ENCODE measurements at regions of chr17 and their contacts with region 1.

Region 1: DNA sequence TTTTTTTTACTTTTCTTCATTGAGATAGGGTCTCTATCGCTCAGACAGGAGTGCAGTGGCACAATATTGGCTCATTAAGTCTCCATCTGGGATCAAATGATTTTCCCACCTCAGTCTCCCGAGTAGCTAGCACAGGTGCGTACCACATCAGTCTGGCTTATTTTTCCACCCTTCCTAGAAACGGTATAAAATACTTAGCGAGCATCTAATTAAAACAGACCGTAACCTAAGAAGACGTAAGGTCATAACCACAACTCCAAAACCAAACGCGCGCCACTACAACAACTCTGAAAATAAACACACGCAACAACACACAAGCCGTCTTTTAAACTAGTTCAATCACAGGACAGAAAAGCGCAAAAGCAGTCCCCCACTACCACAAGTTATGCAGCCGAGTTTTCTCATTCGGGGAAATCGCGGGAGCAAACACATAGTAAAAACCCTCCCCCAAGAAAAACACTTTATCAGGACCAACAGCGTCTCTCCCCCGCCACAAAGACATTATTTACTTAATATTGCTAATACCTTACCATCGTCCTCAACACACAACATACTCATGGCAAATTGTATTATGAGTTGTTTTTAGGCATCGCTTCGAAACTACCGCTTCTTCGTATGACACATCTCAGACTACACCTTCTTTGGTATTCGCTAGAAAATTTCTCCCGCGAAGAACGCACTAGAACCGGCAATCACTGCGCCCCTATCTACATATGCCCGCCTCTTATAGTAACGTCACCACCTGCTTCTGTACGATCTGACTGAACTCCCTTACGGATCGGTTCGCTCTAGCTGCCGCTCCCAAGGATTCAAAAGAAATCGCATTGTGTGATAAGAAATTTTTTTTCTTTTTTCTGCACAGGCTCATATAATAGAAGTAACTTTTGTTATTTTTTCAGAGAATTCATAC is 32.8 kb downstream of the TEX14 start:
- DNase-seq: peak; percentile 81 to 96 (median 84)
- ATAC-seq: peak; percentile 97
- H3K4me3 ChIP-seq: peak overlapping the region; percentile 40
- H3K27ac ChIP-seq: peak overlapping the region; percentile 100
- H3K4me1 ChIP-seq: peaks cover 3 to 5% of the 10 kb centered on the region in 2 experiments; a peak in 2 of 5 replicates
- H3K27me3 ChIP-seq: no peaks in the 10 kb centered on the region
- CTCF ChIP-seq: peak in 2 of 3 experiments; percentile 17 to 18; a peak in 2 of 6 replicates
- EP300 ChIP-seq: peak; percentile 89
- POLR2A ChIP-seq: peak; percentile 100
- RAD21 ChIP-seq: peak; percentile 28 to 59; a peak in 3 of 4 replicates

Region 2: GRCh38 chr17:58595326-58595725 is 63.7 kb before region 1 on chr17:
- CTCF ChIA-PET with region 1: no interaction called
- POLR2A ChIA-PET with region 1: interaction called, 12 read pairs
- in situ Hi-C with region 1: no loop called
- intact Hi-C with region 1: no loop called
- DNase-seq: peak in 1 of 4 experiments; percentile 21
- ATAC-seq: peak; percentile 82
- H3K4me3 ChIP-seq: no peak overlapping the region
- H3K27ac ChIP-seq: no peak overlapping the region
- H3K4me1 ChIP-seq: no peaks in the 10 kb centered on the region; a peak in 1 of 5 replicates
- H3K27me3 ChIP-seq: no peaks in the 10 kb centered on the region
- CTCF ChIP-seq: peak; percentile 14 to 21 (median 19); a peak in 3 of 6 replicates
- EP300 ChIP-seq: no peak
- POLR2A ChIP-seq: no peak
- RAD21 ChIP-seq: peak in 1 of 2 experiments; percentile 40; a peak in 2 of 4 replicates

Region 3: GRCh38 chr17:58637011-58637570 is 22.0 kb before region 1 on chr17:
- CTCF ChIA-PET with region 1: no interaction called
- POLR2A ChIA-PET with region 1: interaction called, 281 read pairs
- in situ Hi-C with region 1: no loop called
- intact Hi-C with region 1: no loop called
- DNase-seq: no peak
- ATAC-seq: peak; percentile 26; the same call in 1 of the 3 replicates
- H3K4me3 ChIP-seq: no peak overlapping the region
- H3K27ac ChIP-seq: no peak overlapping the region
- H3K4me1 ChIP-seq: peaks cover 0 to 2% of the 10 kb centered on the region in 2 experiments; a peak in 2 of 5 replicates
- H3K27me3 ChIP-seq: no peaks in the 10 kb centered on the region
- CTCF ChIP-seq: no peak
- EP300 ChIP-seq: no peak
- POLR2A ChIP-seq: no peak
- RAD21 ChIP-seq: no peak

Region 4: GRCh38 chr17:58643140-58643539 is 15.9 kb before region 1 on chr17:
- CTCF ChIA-PET with region 1: no interaction called
- POLR2A ChIA-PET with region 1: interaction called, 74 read pairs
- in situ Hi-C with region 1: no loop called
- intact Hi-C with region 1: no loop called
- DNase-seq: no peak
- ATAC-seq: no peak
- H3K4me3 ChIP-seq: no peak overlapping the region
- H3K27ac ChIP-seq: no peak overlapping the region
- H3K4me1 ChIP-seq: no peaks in the 10 kb centered on the region; a peak in 1 of 5 replicates
- H3K27me3 ChIP-seq: no peaks in the 10 kb centered on the region
- CTCF ChIP-seq: no peak
- EP300 ChIP-seq: no peak
- POLR2A ChIP-seq: no peak
- RAD21 ChIP-seq: no peak

Region 5: DNA sequence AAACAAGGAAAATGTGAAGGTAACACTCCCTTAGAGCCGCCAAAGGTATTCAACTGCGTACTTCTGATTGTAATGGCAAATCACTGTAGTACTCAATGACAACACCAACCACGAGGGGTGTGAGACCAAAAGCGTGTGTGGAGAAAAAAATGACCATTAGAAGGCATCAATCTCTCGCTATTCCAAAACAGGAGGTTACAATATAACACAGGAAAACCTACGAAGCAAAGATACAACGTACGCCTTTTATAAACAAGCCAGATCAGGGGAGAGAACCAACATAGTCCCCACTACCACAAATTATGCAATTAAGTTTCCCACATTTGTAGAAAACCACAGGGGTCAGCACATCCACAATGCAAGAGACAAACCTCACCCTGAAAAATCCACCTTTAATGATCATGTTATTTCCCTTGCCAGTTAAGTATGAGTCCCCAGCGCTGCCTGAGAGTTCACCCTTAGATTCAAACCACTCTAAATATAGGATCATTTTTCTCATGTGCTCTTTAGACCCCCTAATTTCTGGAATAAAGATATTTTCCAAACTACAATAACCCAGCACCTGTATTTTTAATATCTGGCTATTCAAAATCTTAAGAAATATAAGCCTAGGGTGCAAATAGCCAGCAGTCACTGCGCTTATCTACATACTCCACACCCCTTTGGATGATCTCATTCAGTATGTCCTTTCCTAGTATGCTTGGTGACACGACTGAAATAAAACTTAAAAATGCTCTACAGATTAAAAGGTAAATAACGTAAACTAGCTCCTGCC is 20.4 kb after region 1 on chr17:
- CTCF ChIA-PET with region 1: no interaction called
- POLR2A ChIA-PET with region 1: interaction called, 97 read pairs
- in situ Hi-C with region 1: no loop called
- intact Hi-C with region 1: loop called (anchors 1 kb)
- DNase-seq: peak; percentile 62 to 93 (median 75)
- ATAC-seq: peak; percentile 96
- H3K4me3 ChIP-seq: no peak overlapping the region
- H3K27ac ChIP-seq: peak overlapping the region; percentile 92
- H3K4me1 ChIP-seq: peaks cover 0 to 3% of the 10 kb centered on the region in 2 experiments; a peak in 2 of 5 replicates
- H3K27me3 ChIP-seq: no peaks in the 10 kb centered on the region
- CTCF ChIP-seq: peak; percentile 14 to 33 (median 30); a peak in 2 of 6 replicates
- EP300 ChIP-seq: peak; percentile 84
- POLR2A ChIP-seq: peak; percentile 100
- RAD21 ChIP-seq: peak; percentile 28 to 81; a peak in 3 of 4 replicates

Region 6: GRCh38 chr17:59641799-59642489 is 982.9 kb after region 1 on chr17:
- CTCF ChIA-PET with region 1: no interaction called
- POLR2A ChIA-PET with region 1: no interaction called
- in situ Hi-C with region 1: no loop called
- intact Hi-C with region 1: no loop called
- DNase-seq: no peak
- ATAC-seq: 0 out of 3 replicates have a peak, but pooled peaks have one; percentile 17
- H3K4me3 ChIP-seq: no peak overlapping the region
- H3K27ac ChIP-seq: no peak overlapping the region
- H3K4me1 ChIP-seq: peaks cover 3 to 7% of the 10 kb centered on the region in 2 experiments
- H3K27me3 ChIP-seq: no peaks in the 10 kb centered on the region
- CTCF ChIP-seq: no peak
- EP300 ChIP-seq: no peak
- POLR2A ChIP-seq: no peak
- RAD21 ChIP-seq: no peak